IMR-90 (cell line): ENCODE measurements at regions of chrX and their contacts with region 1.

Region 1: DNA sequence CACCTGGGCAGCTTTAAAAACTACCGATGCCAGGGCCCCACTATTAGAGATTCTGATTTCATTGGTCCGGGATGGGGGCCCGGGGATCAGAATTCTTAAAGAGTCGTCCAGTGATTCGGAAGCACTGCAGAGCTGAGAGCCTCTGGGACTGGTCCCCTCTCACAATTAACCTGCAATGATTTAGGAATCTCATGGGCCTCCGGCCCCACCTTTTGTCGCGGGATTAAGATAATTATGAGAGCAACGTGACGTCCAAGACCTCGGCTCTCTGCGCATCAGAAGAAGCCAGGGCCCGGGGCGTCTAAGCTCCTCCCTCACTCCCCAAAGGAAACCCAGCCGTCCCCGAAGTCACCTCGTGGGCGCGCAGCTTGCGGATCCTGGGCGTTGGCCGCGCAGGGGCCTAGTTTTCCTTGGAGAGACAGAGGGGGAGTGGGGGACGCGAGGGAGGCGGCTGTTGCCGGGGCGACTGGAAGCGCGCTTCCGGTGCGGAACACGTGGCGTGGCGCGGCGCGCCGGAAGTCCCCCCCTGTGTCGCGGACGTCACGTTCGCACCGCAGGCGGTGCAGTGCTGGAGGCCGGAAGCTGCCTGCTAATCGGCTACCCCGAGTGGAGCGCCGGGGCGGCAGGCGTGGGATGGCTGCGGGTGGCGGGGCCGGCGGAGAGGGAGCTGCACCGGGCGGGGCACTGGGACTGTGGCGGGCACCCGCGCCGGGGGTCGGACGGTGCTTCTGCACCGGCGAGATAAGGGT is at the start of gene GEMIN8:
- DNase-seq: peak; percentile 91
- ATAC-seq: peak; percentile 87
- H3K4me3 ChIP-seq: peak within 1 kb of the TSS; percentile 68
- H3K27ac ChIP-seq: peak within 1 kb of the TSS; percentile 80
- H3K4me1 ChIP-seq: peaks cover 4% of the 10 kb centered on the region
- H3K27me3 ChIP-seq: peaks cover 3% of the 10 kb centered on the region; the same call in 1 of the 2 replicates
- CTCF ChIP-seq: no peak
- POLR2A ChIP-seq: peak; percentile 81
- RAD21 ChIP-seq: no peak
- total RNA-seq, gene GEMIN8: 11.1 and 12.0 TPM in 2 replicates

Region 2: GRCh38 chrX:13506574-13506973 is 523.0 kb before region 1 on chrX:
- CTCF ChIA-PET with region 1: interaction called, 5 read pairs
- POLR2A ChIA-PET with region 1: no interaction called
- dilution Hi-C with region 1: no loop called
- in situ Hi-C with region 1: loop called (anchors 5 kb)
- intact Hi-C with region 1: loop called (anchors 1 kb)
- DNase-seq: peak; percentile 61
- ATAC-seq: 0 out of 2 replicates have a peak, but pooled peaks have one; percentile 48
- H3K4me3 ChIP-seq: no peak overlapping the region
- H3K27ac ChIP-seq: no peak overlapping the region
- H3K4me1 ChIP-seq: no peaks in the 10 kb centered on the region
- H3K27me3 ChIP-seq: peaks cover 9% of the 10 kb centered on the region
- CTCF ChIP-seq: peak; percentile 94
- POLR2A ChIP-seq: no peak
- RAD21 ChIP-seq: peak; percentile 95

Region 3: DNA sequence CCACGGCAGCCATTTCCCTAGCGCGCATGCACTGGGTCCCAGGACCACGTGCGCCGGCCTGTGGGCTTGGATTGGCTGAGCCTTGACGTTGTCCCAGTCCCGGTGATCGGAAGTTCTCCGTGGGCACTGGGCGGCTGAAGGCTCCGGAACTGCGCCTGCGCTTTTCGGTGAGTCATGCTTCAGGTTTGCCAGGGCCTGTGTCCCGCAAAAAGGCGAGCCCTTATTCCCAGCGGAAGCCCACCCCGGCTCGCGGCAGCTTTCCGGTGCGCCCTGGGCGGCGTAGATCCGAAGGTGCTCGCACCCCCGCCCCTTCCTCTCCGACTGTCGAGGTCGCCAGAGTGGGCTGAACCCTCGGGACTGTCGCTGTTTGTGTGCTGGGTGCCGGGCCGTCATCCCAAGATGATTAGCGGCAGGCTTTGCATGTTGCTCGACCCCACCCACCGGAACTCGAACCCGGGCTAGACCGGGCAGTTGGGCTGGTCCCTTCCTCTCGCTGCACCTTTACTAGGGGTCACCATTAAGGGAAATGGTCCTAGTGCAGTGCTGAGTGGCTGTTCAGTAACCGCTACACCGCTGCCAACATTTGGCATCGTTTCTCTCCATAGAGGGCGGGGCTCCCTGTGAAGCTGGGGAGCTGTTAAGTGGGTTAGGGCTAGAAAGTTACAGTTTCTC is 376.4 kb before region 1 on chrX and contains the start of gene TCEANC:
- CTCF ChIA-PET with region 1: no interaction called
- POLR2A ChIA-PET with region 1: no interaction called
- dilution Hi-C with region 1: no loop called
- in situ Hi-C with region 1: loop called (anchors 5 kb)
- intact Hi-C with region 1: loop called (anchors 1 kb)
- DNase-seq: peak; percentile 98
- ATAC-seq: peak; percentile 97
- H3K4me3 ChIP-seq: peak within 1 kb of the TSS; percentile 73
- H3K27ac ChIP-seq: peak within 1 kb of the TSS; percentile 96
- H3K4me1 ChIP-seq: peaks cover 2% of the 10 kb centered on the region
- H3K27me3 ChIP-seq: no peaks in the 10 kb centered on the region; the same call in 1 of the 2 replicates
- CTCF ChIP-seq: no peak
- POLR2A ChIP-seq: peak; percentile 81
- RAD21 ChIP-seq: no peak
- total RNA-seq, gene TCEANC: 1.4 and 2.5 TPM in 2 replicates

Region 4: GRCh38 chrX:13658602-13659001 is 371.0 kb before region 1 on chrX:
- CTCF ChIA-PET with region 1: no interaction called
- POLR2A ChIA-PET with region 1: no interaction called
- dilution Hi-C with region 1: no loop called
- in situ Hi-C with region 1: loop called (anchors 5 kb)
- intact Hi-C with region 1: loop called (anchors 1 kb)
- DNase-seq: peak; percentile 73
- ATAC-seq: peak; percentile 71
- H3K4me3 ChIP-seq: no peak overlapping the region
- H3K27ac ChIP-seq: no peak overlapping the region
- H3K4me1 ChIP-seq: peaks cover 5% of the 10 kb centered on the region; the same call in 1 of the 2 replicates
- H3K27me3 ChIP-seq: peaks cover 2% of the 10 kb centered on the region
- CTCF ChIP-seq: peak; percentile 80
- POLR2A ChIP-seq: no peak
- RAD21 ChIP-seq: peak; percentile 73

Region 5: DNA sequence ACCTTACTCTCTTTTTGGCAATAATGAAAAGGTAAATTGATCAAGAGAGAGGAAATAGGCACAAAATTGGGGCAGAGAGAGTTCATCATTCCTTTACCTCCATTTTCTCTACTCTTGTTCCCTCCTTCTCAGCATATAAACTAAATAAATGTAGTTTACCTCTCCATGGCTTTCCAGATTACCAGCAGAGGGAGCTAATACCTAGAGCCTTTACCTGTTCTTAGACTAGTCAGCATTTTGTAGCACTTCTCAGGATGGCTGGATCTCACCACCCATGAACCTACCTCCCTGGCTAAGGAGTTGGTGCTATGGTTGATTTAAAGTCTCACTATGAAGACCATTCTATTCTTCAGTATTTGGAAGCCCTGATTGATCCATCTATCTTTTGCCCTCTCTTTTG is 279.4 kb before region 1 on chrX:
- CTCF ChIA-PET with region 1: no interaction called
- POLR2A ChIA-PET with region 1: no interaction called
- dilution Hi-C with region 1: no loop called
- in situ Hi-C with region 1: no loop called
- intact Hi-C with region 1: loop called (anchors 1 kb)
- DNase-seq: peak; percentile 48
- ATAC-seq: peak; percentile 49
- H3K4me3 ChIP-seq: no peak overlapping the region
- H3K27ac ChIP-seq: no peak overlapping the region
- H3K4me1 ChIP-seq: peaks cover 2% of the 10 kb centered on the region
- H3K27me3 ChIP-seq: no peaks in the 10 kb centered on the region
- CTCF ChIP-seq: peak; percentile 57
- POLR2A ChIP-seq: no peak
- RAD21 ChIP-seq: peak; percentile 51

Region 6: GRCh38 chrX:13764765-13765164 is 264.8 kb before region 1 on chrX:
- CTCF ChIA-PET with region 1: no interaction called
- POLR2A ChIA-PET with region 1: no interaction called
- dilution Hi-C with region 1: no loop called
- in situ Hi-C with region 1: loop called (anchors 10 kb)
- intact Hi-C with region 1: no loop called
- DNase-seq: no peak
- ATAC-seq: no peak
- H3K4me3 ChIP-seq: no peak overlapping the region
- H3K27ac ChIP-seq: no peak overlapping the region
- H3K4me1 ChIP-seq: no peaks in the 10 kb centered on the region
- H3K27me3 ChIP-seq: no peaks in the 10 kb centered on the region
- CTCF ChIP-seq: no peak
- POLR2A ChIP-seq: no peak
- RAD21 ChIP-seq: no peak

Region 7: DNA sequence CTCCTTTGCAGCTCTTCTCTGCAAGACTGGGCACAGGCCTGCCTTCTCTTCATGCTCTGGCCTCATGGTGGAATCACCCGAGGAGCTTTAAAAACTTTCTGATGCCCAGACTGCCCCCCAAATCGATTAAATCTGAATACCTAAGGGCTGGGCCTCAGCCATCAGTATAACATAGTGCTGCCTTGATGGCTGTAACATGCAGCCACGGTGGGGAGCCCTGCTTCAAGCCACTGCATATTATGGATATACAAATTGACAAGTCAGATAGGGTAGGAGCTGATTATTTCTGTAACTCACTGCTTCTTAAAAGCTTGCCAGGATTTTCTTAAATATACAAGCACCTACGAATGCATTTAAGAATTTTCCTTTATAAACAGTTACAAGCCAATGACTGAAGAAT is 253.2 kb before region 1 on chrX:
- CTCF ChIA-PET with region 1: no interaction called
- POLR2A ChIA-PET with region 1: no interaction called
- dilution Hi-C with region 1: no loop called
- in situ Hi-C with region 1: no loop called
- intact Hi-C with region 1: loop called (anchors 2 kb)
- DNase-seq: peak; percentile 37
- ATAC-seq: peak; percentile 69
- H3K4me3 ChIP-seq: no peak overlapping the region
- H3K27ac ChIP-seq: no peak overlapping the region; the same call in 1 of the 2 replicates
- H3K4me1 ChIP-seq: no peaks in the 10 kb centered on the region; the same call in 1 of the 2 replicates
- H3K27me3 ChIP-seq: peaks cover 2% of the 10 kb centered on the region; the same call in 1 of the 2 replicates
- CTCF ChIP-seq: no peak
- POLR2A ChIP-seq: no peak
- RAD21 ChIP-seq: no peak; the same call in 1 of the 2 replicates